ENCODE measurements at regions of chr6 and their contacts with region 1.

Region 1: GRCh38 chr6:120363429-120363828 is 970.9 kb downstream of the TBC1D32 start:
- DNase-seq: no peak
- ATAC-seq: no peak
- H3K4me3 ChIP-seq: no peak overlapping the region
- H3K27ac ChIP-seq: no peak overlapping the region
- H3K4me1 ChIP-seq: no peaks in the 10 kb centered on the region
- H3K27me3 ChIP-seq: no peaks in the 10 kb centered on the region
- CTCF ChIP-seq: no peak
- EP300 ChIP-seq: no peak
- POLR2A ChIP-seq: no peak
- RAD21 ChIP-seq: no peak

Region 2: GRCh38 chr6:119347466-119348095 is 1015.8 kb before region 1 on chr6:
- CTCF ChIA-PET with region 1: no interaction called
- POLR2A ChIA-PET with region 1: no interaction called
- in situ Hi-C with region 1: no loop called
- intact Hi-C with region 1: no loop called
- DNase-seq: peak; percentile 96
- ATAC-seq: peak; percentile 19
- H3K4me3 ChIP-seq: peak overlapping the region; percentile 89 to 99 (median 99)
- H3K27ac ChIP-seq: peak overlapping the region; percentile 100
- H3K4me1 ChIP-seq: peaks cover 43% of the 10 kb centered on the region
- H3K27me3 ChIP-seq: no peaks in the 10 kb centered on the region; a peak in 1 of 5 replicates
- CTCF ChIP-seq: no peak
- EP300 ChIP-seq: peak; percentile 89 to 98; a peak in 3 of 4 replicates
- POLR2A ChIP-seq: peak; percentile 44 to 67; a peak in 3 of 4 replicates
- RAD21 ChIP-seq: no peak; the same call in 1 of the 2 replicates

Region 3: DNA sequence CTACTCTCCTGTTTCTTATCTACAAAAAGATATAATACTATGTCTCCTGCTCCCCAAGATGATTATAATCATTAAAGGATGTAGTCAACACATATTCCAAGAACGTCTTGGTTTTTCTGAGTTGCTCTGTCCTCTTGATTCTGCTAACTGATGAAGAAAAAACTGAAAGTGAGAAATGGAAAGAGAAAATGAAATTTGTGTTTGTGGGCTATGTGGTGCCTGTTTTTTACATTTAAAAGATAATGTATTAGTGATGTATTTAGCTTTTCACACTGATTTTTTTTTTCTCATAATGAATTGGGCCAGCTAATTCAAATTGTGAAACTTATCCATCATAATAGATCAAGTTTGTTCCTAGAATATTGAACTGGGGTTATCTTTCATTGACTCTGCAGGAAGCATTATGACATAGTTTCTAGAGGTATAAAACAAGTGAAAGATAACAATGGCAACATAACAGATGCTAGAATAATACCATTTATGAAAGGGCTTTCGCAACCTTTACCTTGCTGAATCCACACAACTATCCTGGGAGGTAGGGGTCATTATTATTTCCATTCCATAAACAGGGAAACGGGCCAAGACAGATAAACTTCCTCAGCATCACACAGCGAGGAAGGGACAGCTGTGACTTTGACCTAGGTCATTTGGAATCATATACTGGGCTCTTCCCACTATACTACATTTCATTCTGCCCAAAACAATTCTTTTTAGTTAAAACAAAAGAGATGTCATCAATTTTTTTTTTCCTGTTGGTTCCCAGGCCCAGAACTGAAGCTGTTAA is 1408.7 kb after region 1 on chr6:
- CTCF ChIA-PET with region 1: no interaction called
- POLR2A ChIA-PET with region 1: no interaction called
- in situ Hi-C with region 1: no loop called
- intact Hi-C with region 1: loop called (anchors 5 kb)
- DNase-seq: no peak
- ATAC-seq: no peak
- H3K4me3 ChIP-seq: no peak overlapping the region
- H3K27ac ChIP-seq: no peak overlapping the region
- H3K4me1 ChIP-seq: no peaks in the 10 kb centered on the region
- H3K27me3 ChIP-seq: no peaks in the 10 kb centered on the region
- CTCF ChIP-seq: no peak
- EP300 ChIP-seq: no peak
- POLR2A ChIP-seq: no peak
- RAD21 ChIP-seq: no peak

Measured in HepG2 (cell line).